Caco-2 (cell line): ENCODE measurements at regions of chr7 and their contacts with region 1.

Region 1: GRCh38 chr7:142139597-142140400 is 28.3 kb downstream of the MGAM2 start:
- DNase-seq: peak; percentile 21 to 45
- H3K4me3 ChIP-seq: no peak overlapping the region
- H3K4me3 Mint-ChIP-seq: peak overlapping the region; percentile 17
- H3K27ac Mint-ChIP-seq: peak overlapping the region; percentile 43
- H3K4me1 ChIP-seq: peaks cover 40% of the 10 kb centered on the region
- H3K4me1 Mint-ChIP-seq: peaks cover 22% of the 10 kb centered on the region
- H3K27me3 ChIP-seq: no peaks in the 10 kb centered on the region
- H3K27me3 Mint-ChIP-seq: no peaks in the 10 kb centered on the region
- CTCF ChIP-seq: no peak

Region 2: DNA sequence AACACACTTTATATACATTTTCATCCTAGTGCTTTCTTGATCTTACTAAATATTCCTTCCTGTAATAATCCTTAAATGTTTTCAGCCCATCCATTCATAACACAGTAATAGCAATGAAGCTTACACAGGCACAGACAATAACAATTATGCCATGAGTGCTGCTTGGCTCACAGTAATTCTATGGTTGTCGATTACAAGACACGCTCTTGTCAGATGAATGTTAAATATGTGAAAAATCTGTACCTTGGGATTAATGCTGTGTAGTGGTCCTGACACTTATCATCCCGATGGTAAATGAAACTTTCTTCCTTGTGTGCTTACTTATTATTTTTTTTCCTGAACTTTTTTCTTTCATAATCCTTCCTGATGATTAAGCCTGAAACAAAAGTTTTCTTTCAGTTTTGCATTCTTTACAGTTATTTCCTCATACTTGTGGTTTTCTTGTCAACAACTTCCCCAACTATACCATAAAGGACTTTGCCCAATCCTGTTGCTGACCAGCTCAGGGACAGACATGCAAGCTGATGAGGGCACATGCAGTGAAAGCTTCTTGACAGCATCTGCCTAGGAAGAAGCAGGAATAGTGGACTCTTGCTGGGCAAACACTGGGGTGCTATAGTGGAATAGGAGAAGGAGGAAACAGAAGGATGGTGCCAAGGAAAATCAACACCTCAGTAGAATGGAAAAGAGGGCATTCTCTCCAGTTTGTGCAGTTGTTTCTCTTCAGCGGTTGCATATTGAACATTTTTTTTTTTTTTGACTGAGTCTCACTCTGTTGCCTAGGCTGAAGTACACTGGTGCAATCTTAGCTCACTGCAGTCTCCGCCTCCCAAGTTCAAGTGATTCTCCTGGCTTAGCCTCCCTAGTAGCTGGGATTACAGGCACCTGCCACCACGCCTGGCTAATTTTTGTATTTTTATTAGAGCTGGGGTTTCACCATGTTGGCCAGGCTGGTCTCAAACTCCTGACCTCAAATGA is 35.0 kb before region 1 on chr7:
- CTCF ChIA-PET with region 1: no interaction called
- POLR2A ChIA-PET with region 1: no interaction called
- intact Hi-C with region 1: loop called (anchors 2 kb)
- DNase-seq: peak; percentile 73 to 86
- H3K4me3 ChIP-seq: no peak overlapping the region
- H3K4me3 Mint-ChIP-seq: peak overlapping the region; percentile 57
- H3K27ac Mint-ChIP-seq: peak overlapping the region; percentile 92
- H3K4me1 ChIP-seq: peaks cover 45% of the 10 kb centered on the region
- H3K4me1 Mint-ChIP-seq: peaks cover 39% of the 10 kb centered on the region
- H3K27me3 ChIP-seq: no peaks in the 10 kb centered on the region
- H3K27me3 Mint-ChIP-seq: no peaks in the 10 kb centered on the region
- CTCF ChIP-seq: no peak

Region 3: GRCh38 chr7:142120524-142120923 is 19.3 kb before region 1 on chr7:
- CTCF ChIA-PET with region 1: no interaction called
- POLR2A ChIA-PET with region 1: no interaction called
- intact Hi-C with region 1: loop called (anchors 1 kb)
- DNase-seq: no peak
- H3K4me3 ChIP-seq: no peak overlapping the region
- H3K4me3 Mint-ChIP-seq: no peak overlapping the region
- H3K27ac Mint-ChIP-seq: peak overlapping the region; percentile 66
- H3K4me1 ChIP-seq: peaks cover 17% of the 10 kb centered on the region
- H3K4me1 Mint-ChIP-seq: peaks cover 9% of the 10 kb centered on the region
- H3K27me3 ChIP-seq: no peaks in the 10 kb centered on the region
- H3K27me3 Mint-ChIP-seq: no peaks in the 10 kb centered on the region
- CTCF ChIP-seq: no peak

Region 4: DNA sequence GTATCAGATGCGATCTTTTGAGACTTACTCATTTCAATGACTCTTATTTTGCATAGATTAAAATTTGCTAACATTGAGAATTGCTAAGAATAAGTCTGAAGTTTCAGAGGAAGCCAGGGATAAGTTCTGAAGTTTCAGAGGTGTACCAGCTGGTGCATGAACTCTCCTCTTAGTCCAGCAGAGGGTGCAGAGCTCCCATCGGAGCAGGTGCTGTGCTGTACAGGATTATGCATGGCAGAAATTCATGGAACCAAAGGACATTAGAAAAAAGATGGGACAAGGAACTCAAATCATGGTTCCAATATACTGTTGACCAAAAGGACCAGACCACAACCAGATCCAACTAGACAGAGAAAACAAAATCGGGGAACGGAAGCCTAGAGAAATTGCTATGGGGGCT is 13.6 kb after region 1 on chr7:
- CTCF ChIA-PET with region 1: no interaction called
- POLR2A ChIA-PET with region 1: no interaction called
- intact Hi-C with region 1: no loop called
- DNase-seq: peak; percentile 46 to 58
- H3K4me3 ChIP-seq: no peak overlapping the region
- H3K4me3 Mint-ChIP-seq: no peak overlapping the region
- H3K27ac Mint-ChIP-seq: no peak overlapping the region
- H3K4me1 ChIP-seq: peaks cover 23% of the 10 kb centered on the region
- H3K4me1 Mint-ChIP-seq: peaks cover 16% of the 10 kb centered on the region
- H3K27me3 ChIP-seq: no peaks in the 10 kb centered on the region
- H3K27me3 Mint-ChIP-seq: no peaks in the 10 kb centered on the region
- CTCF ChIP-seq: peak; percentile 34 to 79